ENCODE measurements at regions of chr6 and their contacts with region 1.

Region 1: GRCh38 chr6:85593438-85594196 is at the start of gene SNX14:
- DNase-seq: peak; percentile 97
- ATAC-seq: peak; percentile 99
- total RNA-seq, gene SNX14: 27.6 TPM

Region 2: GRCh38 chr6:84674395-84674794 is 919.2 kb before region 1 on chr6:
- intact Hi-C with region 1: no loop called
- DNase-seq: no peak
- ATAC-seq: no peak

Region 3: GRCh38 chr6:85157311-85157710 is 436.3 kb before region 1 on chr6:
- intact Hi-C with region 1: no loop called
- DNase-seq: no peak
- ATAC-seq: no peak

Region 4: DNA sequence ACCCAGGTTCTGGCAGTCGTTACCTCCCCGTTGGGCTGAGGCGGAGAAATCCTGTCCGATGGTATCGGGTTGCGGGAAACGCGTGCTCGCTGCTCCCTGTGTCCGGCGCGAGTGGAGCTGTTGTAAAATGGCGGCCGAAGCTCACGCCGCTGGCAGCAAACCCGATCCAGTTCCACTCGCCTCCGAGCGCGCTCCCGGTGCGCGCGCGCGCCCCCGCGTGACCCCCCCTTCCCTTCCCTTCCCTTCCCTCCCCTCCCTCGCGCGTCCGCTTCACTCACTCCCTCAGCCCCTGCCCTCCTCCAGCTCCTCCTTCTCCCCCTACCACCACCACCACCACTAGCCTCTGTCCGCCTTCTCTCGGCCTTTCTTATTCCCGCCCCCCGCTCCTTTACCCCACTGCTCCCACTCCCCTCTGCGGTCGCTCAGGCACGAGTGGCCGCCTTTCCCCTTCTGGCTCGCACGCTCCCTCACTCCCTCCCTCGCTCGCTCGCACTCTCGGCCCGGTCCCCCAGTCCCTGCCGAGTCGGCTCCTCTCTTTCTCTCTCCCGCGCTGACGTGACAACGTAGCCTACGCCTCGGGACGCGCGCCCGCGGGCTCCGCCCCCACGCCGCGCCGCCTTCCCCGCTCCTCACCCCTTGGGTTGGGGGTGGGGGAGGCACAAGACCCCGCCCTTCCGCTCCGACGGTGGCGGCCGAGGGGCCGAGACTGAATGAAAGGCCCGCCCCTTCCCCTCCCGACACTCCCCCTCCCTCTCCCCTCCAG is 49.3 kb after region 1 on chr6 and contains the start of gene SYNCRIP:
- intact Hi-C with region 1: loop called (anchors 5 kb)
- DNase-seq: peak; percentile 99
- ATAC-seq: peak; percentile 88
- total RNA-seq, gene SYNCRIP: 55.7 TPM

Region 5: DNA sequence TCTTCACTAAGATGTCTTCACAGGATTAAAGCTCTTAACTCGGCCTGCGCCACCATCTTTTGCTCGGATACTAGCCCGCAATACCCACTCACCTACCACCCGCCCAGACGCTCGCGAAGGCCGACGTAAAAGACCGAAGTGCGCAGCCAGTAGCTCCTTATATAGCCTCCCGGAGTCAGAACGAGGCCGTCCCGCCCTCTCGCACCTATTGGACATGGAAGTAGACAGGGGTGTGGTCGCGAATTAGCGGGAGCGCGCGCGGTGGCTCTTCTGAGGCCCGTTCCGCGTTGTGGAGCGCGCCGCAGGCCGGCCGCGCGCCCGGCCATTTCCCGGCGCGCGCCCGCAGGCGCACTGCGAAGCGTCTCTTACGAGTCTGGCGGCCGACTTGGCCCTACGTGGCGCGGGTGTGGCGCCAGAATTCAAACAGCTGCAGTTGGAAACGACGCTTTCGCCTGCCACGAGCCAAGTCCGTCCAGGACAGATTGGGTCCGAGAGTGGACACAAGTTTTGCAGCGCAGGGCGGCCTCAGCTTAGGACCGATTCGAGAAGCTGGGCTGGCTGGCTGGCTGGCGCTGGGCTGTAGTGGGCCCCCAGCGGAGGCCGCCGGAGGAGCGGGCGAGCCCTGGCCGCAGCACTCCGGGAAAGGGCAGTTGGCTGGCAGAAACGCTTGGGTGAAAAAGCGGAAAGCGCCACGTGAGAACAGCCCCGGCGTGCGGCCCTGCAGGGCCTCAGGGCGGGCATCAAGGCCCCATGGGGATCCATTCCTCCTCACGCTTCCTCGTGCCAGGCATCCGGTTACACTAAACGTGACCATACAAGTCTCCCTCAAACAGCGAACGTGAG is 85.2 kb after region 1 on chr6:
- intact Hi-C with region 1: loop called (anchors 5 kb)
- DNase-seq: peak; percentile 99
- ATAC-seq: peak; percentile 99